ENCODE measurements at regions of chr6 and their contacts with region 1.

Region 1: DNA sequence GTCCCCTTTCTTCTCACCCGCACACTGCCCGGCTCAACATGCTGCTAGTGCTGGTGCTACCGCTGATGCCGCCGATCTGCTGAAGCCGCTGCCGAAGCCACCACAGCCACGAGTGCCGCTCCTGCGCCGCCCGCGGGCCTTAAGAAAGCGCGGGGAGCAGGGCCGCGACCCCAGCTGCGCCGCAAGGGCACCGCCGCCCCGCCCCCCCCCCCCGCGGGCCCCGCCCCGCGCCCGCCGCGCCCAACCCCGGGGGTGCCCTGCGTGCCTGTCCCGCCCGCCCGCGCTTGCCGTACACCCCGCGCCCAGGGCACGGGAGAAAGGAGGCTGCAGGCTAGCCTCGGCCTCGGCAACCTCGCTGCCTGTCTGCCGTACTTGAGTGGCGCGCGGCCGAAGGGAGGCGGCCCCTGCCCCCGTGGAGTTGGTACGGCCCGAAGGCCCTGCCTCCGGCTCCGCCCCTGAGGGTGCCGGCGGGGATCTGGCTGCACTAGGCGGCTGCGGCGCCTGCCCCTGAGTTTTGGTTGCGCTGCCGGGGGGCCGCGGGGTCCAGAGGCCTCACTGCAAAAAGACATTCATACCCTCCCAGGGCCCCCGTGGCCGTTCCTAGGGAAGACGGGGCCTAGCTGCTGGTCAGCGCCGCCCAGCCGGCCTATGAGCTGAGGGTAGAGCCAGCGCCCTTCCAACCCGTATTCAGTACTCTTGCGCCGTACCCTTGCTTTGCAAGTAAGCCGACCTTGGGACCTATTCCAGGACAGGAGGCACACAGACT is at the start of gene SOD2:
- DNase-seq: peak; percentile 86 to 94 (median 93)
- ATAC-seq: peak; percentile 87
- H3K4me3 ChIP-seq: peak within 1 kb of the TSS; percentile 73
- H3K4me1 ChIP-seq: peaks cover 20% of the 10 kb centered on the region
- CTCF ChIP-seq: no peak
- total RNA-seq, gene SOD2: 286 to 462 (median 400) TPM

Region 2: GRCh38 chr6:159726918-159727716 is 33.8 kb after region 1 on chr6 and contains the start of gene WTAP:
- intact Hi-C with region 1: loop called (anchors 5 kb)
- DNase-seq: peak; percentile 97 to 99 (median 98)
- ATAC-seq: peak; percentile 95
- H3K4me3 ChIP-seq: peak within 1 kb of the TSS; percentile 97
- H3K4me1 ChIP-seq: peaks cover 13% of the 10 kb centered on the region
- CTCF ChIP-seq: no peak
- total RNA-seq, gene WTAP: 81.1 to 85.8 (median 84.4) TPM